GM23248 (cell line): ENCODE measurements at regions of chr9 and their contacts with region 1.

Region 1: GRCh38 chr9:17185481-17186029 is 50.7 kb downstream of the CNTLN start:
- DNase-seq: no peak
- H3K4me3 ChIP-seq: no peak overlapping the region
- H3K27ac ChIP-seq: no peak overlapping the region
- H3K4me1 ChIP-seq: no peaks in the 10 kb centered on the region
- H3K27me3 ChIP-seq: no peaks in the 10 kb centered on the region

Region 2: DNA sequence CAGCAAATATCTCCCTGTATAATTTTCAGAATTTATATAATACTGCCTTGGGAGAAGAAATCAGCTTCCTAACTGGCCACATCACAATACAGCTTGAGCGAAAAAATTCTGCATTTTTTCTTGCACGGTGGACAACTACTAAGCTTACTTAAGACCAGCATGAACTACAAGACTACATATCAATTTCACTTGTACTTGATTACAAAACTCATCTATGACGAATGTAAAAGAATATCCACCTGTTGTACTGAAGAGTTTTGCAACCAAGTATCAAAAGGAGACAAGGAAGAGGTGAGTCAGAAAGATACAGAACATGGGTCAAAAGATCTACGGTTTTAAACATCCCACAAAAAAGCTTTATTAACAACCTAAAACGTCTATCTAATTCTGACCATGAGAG is 594.5 kb before region 1 on chr9:
- in situ Hi-C with region 1: no loop called
- DNase-seq: no peak
- H3K4me3 ChIP-seq: no peak overlapping the region
- H3K27ac ChIP-seq: no peak overlapping the region
- H3K4me1 ChIP-seq: 0 out of 2 replicates have a peak, but pooled peaks cover 5% of the 10 kb centered on the region
- H3K27me3 ChIP-seq: no peaks in the 10 kb centered on the region

Region 3: DNA sequence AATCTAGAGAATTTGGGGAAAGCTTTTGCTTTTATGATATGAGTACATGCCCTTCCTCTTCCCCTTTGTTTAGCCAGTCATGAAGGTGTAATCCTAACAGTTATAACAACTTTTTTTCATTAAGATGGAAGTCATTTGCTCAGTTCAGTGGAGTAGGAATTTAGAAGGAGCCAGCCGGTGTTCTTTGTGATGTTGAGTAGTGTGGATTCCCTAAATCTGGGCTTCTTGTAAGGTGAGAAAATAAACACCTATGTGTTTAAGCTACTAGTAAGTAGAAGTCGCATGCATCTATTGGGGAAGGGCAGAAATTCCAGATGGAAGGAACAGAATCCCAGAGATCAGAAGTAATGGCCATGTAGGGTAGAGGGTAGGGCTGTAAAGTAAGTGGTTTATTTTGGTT is 64.3 kb before region 1 on chr9:
- in situ Hi-C with region 1: loop called (anchors 10 kb)
- DNase-seq: no peak
- H3K4me3 ChIP-seq: no peak overlapping the region
- H3K27ac ChIP-seq: no peak overlapping the region
- H3K4me1 ChIP-seq: peaks cover 4% of the 10 kb centered on the region; the same call in 1 of the 2 replicates
- H3K27me3 ChIP-seq: no peaks in the 10 kb centered on the region